ENCODE measurements at regions of chr3 and their contacts with region 1.

Region 1: GRCh38 chr3:73502609-73503583 is 121.8 kb downstream of the PDZRN3 start:
- DNase-seq: peak; percentile 70
- ATAC-seq: peak; percentile 90
- H3K4me3 Mint-ChIP-seq: no peak overlapping the region
- H3K27ac Mint-ChIP-seq: no peak overlapping the region
- H3K4me1 Mint-ChIP-seq: peaks cover 11% of the 10 kb centered on the region; the same call in 1 of the 2 replicates
- H3K27me3 Mint-ChIP-seq: no peaks in the 10 kb centered on the region
- CTCF ChIP-seq: peak; percentile 90

Region 2: DNA sequence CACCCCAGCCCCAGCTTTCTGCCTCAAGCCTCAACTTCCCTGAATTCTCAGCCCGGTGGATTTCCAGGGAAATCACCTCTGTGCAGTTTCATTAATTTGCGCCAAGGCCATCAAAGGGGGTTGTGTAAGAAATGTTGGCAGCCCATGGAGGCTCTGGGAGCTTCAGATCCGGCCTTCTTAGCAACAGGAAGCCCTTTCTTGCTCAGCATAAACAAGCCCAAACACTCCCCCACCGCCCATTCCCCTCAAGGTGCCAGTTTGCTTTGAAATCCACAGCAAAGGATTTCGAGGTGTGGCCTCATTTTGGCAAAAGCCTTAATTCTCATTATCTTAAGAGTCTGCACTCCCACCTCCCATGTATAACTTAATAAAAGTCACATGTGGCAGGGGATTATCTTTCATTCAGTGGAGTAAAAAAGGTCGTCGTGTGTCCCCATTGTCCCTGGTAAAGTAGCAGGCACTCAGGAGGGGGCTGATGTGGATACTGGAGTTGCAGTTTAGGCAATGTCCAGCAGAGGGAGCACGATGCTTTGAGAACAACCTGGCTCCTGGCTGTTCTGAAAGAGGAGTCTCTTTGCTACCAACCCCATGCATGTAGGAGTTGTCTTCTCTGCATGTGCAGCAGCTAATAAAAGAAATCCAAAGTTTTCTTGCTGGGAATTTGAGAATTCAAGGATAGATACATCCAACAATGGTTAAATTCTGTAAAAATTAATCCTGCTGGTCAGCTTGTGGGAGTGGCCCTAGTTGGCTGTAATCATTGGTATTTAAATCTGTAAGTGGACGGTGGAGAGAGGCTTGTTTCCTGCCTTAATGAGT is 401.9 kb before region 1 on chr3:
- CTCF ChIA-PET with region 1: interaction called, 14 read pairs
- POLR2A ChIA-PET with region 1: no interaction called
- DNase-seq: peak; percentile 94
- ATAC-seq: peak; percentile 95
- H3K4me3 Mint-ChIP-seq: no peak overlapping the region
- H3K27ac Mint-ChIP-seq: no peak overlapping the region
- H3K4me1 Mint-ChIP-seq: peaks cover 11% of the 10 kb centered on the region
- H3K27me3 Mint-ChIP-seq: no peaks in the 10 kb centered on the region; the same call in 1 of the 2 replicates
- CTCF ChIP-seq: peak; percentile 95

Region 3: DNA sequence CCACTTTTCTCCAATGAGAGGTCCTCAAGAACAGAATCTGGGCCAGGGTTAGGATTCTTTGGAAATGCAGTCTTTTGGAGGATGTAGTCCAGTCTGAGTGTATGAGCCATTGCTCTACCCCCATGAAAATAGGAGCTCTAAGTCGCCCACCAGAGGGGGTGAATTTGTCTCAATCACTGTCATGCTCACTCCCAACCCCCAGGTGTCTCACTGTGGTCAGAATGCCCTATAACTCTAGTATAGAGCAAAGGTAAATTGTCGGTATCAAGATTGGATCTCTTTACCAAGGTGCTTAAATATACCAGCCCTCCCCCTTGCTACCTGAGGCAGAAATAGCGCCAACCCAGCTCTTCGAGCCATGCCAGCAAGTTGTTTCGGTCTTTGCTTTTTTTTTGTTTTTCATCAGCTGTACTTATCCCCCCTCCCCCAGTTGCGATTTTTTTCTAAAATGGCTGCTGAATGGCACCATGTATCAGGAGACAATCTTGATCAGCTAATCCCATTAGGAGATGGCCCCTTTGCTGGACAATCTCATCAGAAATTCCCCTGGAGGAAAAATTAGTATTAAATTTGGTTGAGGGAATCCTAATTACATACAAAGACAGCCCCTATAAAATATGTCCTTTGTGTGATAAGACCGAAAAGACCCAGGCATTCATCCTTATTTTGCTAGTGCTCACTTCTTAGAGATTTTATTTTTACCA is 310.7 kb before region 1 on chr3:
- CTCF ChIA-PET with region 1: interaction called, 30 read pairs
- POLR2A ChIA-PET with region 1: no interaction called
- DNase-seq: peak; percentile 67
- ATAC-seq: peak; percentile 99
- H3K4me3 Mint-ChIP-seq: no peak overlapping the region
- H3K27ac Mint-ChIP-seq: no peak overlapping the region
- H3K4me1 Mint-ChIP-seq: peaks cover 6% of the 10 kb centered on the region; the same call in 1 of the 2 replicates
- H3K27me3 Mint-ChIP-seq: no peaks in the 10 kb centered on the region
- CTCF ChIP-seq: peak; percentile 42

Region 4: GRCh38 chr3:73215281-73215680 is 287.6 kb before region 1 on chr3:
- CTCF ChIA-PET with region 1: no interaction called
- POLR2A ChIA-PET with region 1: no interaction called
- DNase-seq: no peak
- ATAC-seq: no peak
- H3K4me3 Mint-ChIP-seq: no peak overlapping the region
- H3K27ac Mint-ChIP-seq: no peak overlapping the region
- H3K4me1 Mint-ChIP-seq: no peaks in the 10 kb centered on the region
- H3K27me3 Mint-ChIP-seq: no peaks in the 10 kb centered on the region
- CTCF ChIP-seq: no peak

Region 5: GRCh38 chr3:73484656-73485248 is 18.1 kb before region 1 on chr3:
- CTCF ChIA-PET with region 1: interaction called, 11 read pairs
- POLR2A ChIA-PET with region 1: no interaction called
- DNase-seq: peak; percentile 30
- ATAC-seq: peak; percentile 94
- H3K4me3 Mint-ChIP-seq: peak overlapping the region; percentile 53
- H3K27ac Mint-ChIP-seq: peak overlapping the region; percentile 97
- H3K4me1 Mint-ChIP-seq: peaks cover 70% of the 10 kb centered on the region
- H3K27me3 Mint-ChIP-seq: no peaks in the 10 kb centered on the region
- CTCF ChIP-seq: no peak

Region 6: DNA sequence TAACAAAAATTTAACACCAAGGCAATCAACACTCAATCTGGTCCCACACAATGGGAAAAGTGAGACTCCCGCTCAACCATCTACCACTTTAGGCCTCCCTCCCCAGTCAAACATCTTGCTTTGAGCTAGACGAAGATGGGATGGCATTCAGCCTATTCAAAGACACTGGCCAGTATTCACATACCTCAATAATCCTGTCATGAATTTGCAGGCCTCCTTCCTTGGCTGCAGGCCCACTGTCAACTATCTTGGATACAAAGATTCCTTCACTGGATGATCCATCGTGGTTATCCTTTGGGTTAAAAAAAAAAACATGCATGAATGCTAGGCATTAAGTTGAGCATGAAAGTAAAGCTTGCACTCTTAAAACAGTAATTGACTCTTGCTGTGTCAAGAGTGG is 99.3 kb after region 1 on chr3:
- CTCF ChIA-PET with region 1: no interaction called
- POLR2A ChIA-PET with region 1: no interaction called
- DNase-seq: no peak
- ATAC-seq: no peak
- H3K4me3 Mint-ChIP-seq: no peak overlapping the region
- H3K27ac Mint-ChIP-seq: no peak overlapping the region
- H3K4me1 Mint-ChIP-seq: peaks cover 8% of the 10 kb centered on the region
- H3K27me3 Mint-ChIP-seq: no peaks in the 10 kb centered on the region
- CTCF ChIP-seq: no peak